Activated CD4-positive, alpha-beta memory T cell treated with anti-CD3 and anti-CD28 coated beads for 36 hours (primary cell): ENCODE measurements at regions of chr12 and their contacts with region 1.

Region 1: DNA sequence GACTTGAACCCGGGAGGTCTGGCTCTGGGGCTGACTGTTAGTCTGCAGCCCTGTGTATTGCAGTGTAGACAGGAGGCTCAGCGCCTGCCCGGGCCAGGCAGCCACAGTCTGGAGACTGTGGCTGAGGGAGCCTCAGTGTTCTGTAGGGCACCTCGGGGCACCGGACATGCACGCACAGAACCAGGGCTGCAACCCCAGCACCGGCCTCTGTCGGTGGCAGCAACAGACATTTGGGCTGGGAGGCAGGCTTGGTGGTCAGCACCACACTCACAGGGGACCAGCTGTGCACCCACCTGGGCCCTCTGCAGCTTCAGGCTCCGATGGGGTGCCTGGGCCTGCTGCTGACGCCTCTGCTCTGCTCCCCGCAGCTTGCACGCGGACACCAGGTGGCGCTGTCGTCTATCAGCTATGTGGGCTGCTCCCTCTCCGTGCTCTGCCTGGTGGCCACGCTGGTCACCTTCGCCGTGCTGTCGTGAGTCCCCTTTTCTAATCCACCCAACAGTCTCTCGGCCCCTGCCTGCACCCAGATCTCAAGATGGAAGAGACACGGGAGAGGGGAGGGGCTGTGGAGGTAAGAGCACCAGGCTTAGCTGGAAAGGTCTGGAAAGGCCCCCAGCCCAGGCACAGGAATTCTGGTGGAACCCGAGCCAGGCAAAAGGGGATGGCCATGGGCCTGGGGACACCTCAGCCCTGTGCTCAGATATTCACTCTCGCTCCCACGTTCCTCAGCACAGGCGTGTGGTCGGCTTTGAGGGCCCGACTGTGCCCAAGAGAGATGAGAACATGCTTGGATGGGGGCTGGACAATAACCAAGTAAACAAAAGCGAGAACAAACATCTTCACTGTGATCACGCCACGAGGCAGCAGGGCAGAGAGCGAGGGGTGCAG is 151.0 kb downstream of the ADGRD1 start:
- DNase-seq: peak; percentile 88
- H3K4me3 Mint-ChIP-seq: peak overlapping the region; percentile 10
- H3K27ac Mint-ChIP-seq: no peak overlapping the region
- H3K4me1 Mint-ChIP-seq: peaks cover 14% of the 10 kb centered on the region
- H3K27me3 Mint-ChIP-seq: peaks cover 7% of the 10 kb centered on the region

Region 2: DNA sequence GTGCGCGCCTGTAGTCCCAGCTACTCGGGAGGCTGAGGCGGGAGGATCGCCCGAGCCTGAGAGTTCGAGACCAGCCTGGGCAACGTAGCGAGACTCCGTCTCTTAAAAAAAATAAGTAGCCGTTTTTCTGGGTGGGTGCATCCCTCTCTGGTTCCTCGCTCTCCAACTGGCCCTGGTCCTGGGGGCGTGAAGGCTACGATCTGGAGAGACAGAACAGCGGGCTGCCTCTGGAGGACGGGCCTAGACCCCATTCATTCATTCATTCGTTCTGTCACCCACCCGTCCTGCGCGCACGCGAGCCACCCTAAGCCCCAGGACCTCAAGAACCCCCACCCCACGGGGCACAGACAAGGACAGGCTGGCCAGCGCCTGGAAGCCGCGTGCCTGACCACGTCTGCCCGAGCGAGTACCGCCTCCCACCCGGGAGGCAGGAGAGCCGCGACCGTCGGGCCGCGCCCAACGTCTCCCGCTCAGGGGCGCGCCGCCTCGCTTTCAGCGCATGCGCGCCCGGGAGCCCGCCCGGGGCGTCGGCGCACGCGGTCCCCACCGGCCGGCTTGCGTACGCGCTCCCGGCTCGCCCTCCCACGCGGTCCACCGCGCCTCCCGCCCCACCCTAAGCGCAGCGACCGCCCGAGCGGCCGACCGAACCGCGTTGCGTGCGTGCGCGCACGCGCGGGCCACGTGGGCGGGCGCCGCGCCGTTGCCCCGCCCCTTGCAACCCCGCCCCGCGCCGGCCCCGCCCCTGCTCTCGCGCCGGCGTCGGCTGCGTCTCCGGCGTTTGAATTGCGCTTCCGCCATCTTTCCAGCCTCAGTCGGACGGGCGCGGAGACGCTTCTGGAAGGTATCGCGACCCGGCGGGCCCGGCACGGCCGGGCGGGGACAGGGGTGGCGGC is 233.2 kb before region 1 on chr12 and contains the start of gene RAN:
- CTCF ChIA-PET with region 1: no interaction called
- POLR2A ChIA-PET with region 1: no interaction called
- intact Hi-C with region 1: loop called (anchors 5 kb)
- DNase-seq: peak; percentile 95
- H3K4me3 Mint-ChIP-seq: peak within 1 kb of the TSS; percentile 99
- H3K27ac Mint-ChIP-seq: peak within 1 kb of the TSS; percentile 99
- H3K4me1 Mint-ChIP-seq: peaks cover 49% of the 10 kb centered on the region
- H3K27me3 Mint-ChIP-seq: no peaks in the 10 kb centered on the region
- total RNA-seq, gene RAN: 2,100 to 2,144 TPM

Region 3: GRCh38 chr12:130909111-130909510 is 195.6 kb before region 1 on chr12:
- CTCF ChIA-PET with region 1: no interaction called
- POLR2A ChIA-PET with region 1: no interaction called
- intact Hi-C with region 1: no loop called
- DNase-seq: no peak
- H3K4me3 Mint-ChIP-seq: no peak overlapping the region
- H3K27ac Mint-ChIP-seq: no peak overlapping the region
- H3K4me1 Mint-ChIP-seq: no peaks in the 10 kb centered on the region
- H3K27me3 Mint-ChIP-seq: peaks cover 17% of the 10 kb centered on the region

Region 4: GRCh38 chr12:130970165-130970907 is 134.4 kb before region 1 on chr12:
- CTCF ChIA-PET with region 1: no interaction called
- POLR2A ChIA-PET with region 1: no interaction called
- intact Hi-C with region 1: no loop called
- DNase-seq: no peak
- H3K4me3 Mint-ChIP-seq: no peak overlapping the region
- H3K27ac Mint-ChIP-seq: no peak overlapping the region
- H3K4me1 Mint-ChIP-seq: no peaks in the 10 kb centered on the region
- H3K27me3 Mint-ChIP-seq: peaks cover 5% of the 10 kb centered on the region

Region 5: DNA sequence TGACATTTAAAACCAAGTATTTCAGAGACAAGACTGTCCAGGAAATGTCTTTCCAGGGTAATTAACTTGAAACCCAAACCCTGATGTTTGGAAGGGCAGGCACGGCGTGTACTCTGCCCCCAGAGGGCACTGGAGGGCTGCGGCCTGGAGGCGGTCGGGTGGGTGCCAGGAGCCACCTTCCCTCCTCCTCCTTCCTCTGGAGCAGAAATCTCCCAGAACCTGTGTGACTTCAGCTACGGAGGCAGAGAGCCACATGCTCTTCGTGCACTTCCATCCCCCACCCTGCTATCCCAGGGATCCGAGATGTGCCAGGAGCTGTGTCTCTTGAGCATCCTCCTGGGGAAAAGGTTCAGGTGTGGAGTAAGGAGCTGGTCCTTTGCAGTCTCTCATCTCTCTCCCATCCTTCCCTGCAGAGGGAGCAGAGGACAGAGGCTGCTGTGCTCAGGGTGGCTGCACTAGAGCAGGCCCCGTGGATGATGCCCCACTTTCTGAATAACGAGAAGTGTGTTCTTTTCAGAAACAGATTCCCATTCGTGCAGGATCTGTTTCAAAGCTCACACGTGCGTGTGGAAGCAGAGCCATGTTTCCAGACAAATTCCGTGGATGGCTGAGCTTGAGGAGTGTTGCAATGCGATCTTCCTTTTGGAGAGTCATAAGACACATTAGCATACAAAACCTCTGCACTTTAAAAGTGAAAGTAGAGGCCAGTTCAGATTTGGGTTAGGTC is 11.8 kb after region 1 on chr12:
- CTCF ChIA-PET with region 1: interaction called, 33 read pairs
- POLR2A ChIA-PET with region 1: no interaction called
- intact Hi-C with region 1: no loop called
- DNase-seq: no peak
- H3K4me3 Mint-ChIP-seq: no peak overlapping the region
- H3K27ac Mint-ChIP-seq: no peak overlapping the region
- H3K4me1 Mint-ChIP-seq: peaks cover 2% of the 10 kb centered on the region
- H3K27me3 Mint-ChIP-seq: peaks cover 17% of the 10 kb centered on the region

Region 6: DNA sequence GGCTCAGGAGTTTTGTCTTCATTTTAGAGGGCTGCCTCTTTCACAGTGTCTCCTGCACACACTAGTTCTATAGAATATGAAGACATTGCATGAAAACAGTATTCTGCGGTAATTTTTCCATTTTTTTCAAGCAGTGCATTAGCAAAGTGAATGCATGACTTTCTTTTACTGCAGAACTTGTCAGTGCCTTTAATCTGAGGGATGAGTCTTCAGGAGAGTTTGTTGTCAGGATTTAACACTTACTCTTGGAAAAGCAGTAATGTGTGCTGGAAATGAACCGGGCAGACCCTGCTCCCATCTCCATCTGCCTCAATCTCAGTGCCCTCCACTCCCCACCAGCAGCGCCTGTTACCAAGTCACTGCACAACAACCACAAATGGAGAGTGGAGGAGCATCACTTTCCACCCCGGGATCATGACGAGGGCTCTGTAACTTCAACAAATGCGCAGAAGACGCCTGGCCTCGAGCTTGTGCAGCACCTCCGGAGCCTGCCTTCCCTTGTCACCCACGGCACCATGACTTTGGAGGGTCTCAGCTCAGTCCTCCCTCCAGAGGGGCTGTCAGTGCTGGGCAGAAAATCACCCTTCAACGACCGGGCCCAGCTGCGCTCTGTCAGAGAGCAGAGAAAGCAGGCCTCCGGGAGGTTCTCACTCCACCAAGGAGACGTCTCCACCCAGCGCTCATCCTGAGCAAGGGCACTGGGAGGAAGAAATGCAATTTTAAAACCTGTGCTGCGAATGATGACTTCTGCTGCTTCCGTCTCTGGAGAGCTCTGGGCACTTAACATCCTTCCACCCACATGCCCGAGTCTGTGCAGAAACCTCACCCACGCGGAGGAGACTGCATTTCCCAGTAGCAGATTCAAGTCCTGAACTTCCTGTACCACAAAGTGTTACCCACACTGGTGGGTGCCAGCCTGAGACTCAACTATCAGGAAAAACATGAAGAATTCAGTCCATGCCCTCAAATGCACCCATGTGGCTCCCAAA is 104.7 kb after region 1 on chr12:
- CTCF ChIA-PET with region 1: interaction called, 4 read pairs
- POLR2A ChIA-PET with region 1: no interaction called
- intact Hi-C with region 1: loop called (anchors 2 kb)
- DNase-seq: peak; percentile 37
- H3K4me3 Mint-ChIP-seq: no peak overlapping the region
- H3K27ac Mint-ChIP-seq: peak overlapping the region; percentile 46
- H3K4me1 Mint-ChIP-seq: peaks cover 25% of the 10 kb centered on the region
- H3K27me3 Mint-ChIP-seq: peaks cover 7% of the 10 kb centered on the region

Region 7: DNA sequence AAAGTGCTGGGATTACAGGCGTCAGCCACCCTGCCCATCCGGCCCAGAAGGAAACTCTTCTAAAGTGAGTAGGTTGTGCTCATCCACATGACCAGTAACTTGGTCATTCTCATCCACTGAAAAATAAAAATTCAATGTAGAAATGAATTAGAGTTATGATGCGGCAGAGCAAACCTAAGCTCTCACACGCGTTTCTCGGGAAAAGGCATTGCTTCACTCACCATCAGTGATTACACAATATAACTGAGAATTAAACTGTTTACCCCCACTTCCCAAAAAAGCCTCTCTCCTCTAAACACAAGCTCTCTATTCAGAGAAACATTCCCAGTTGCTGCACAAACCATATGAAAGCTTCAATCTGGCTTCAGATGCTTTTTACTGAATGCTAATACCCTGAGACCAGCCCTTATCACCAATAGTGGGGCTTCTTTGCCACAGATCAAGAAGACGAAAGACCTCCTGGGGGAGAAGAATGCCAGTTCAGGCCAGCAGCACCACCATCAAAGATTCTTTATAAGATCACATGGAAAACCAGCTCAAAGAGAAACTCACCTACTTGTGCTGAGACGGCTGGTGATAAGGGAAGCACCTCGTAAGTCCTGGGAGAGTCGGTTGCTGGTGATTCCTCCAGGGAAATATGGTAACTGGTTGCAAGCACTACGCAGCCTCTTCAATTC is 484.7 kb after region 1 on chr12:
- CTCF ChIA-PET with region 1: no interaction called
- POLR2A ChIA-PET with region 1: no interaction called
- intact Hi-C with region 1: no loop called
- DNase-seq: no peak
- H3K4me3 Mint-ChIP-seq: no peak overlapping the region
- H3K27ac Mint-ChIP-seq: no peak overlapping the region
- H3K4me1 Mint-ChIP-seq: peaks cover 16% of the 10 kb centered on the region
- H3K27me3 Mint-ChIP-seq: no peaks in the 10 kb centered on the region

Region 8: GRCh38 chr12:131608740-131609690 is 504.3 kb after region 1 on chr12:
- CTCF ChIA-PET with region 1: no interaction called
- POLR2A ChIA-PET with region 1: no interaction called
- intact Hi-C with region 1: loop called (anchors 10 kb)
- DNase-seq: peak; percentile 78
- H3K4me3 Mint-ChIP-seq: no peak overlapping the region
- H3K27ac Mint-ChIP-seq: peak overlapping the region; percentile 10
- H3K4me1 Mint-ChIP-seq: peaks cover 56% of the 10 kb centered on the region
- H3K27me3 Mint-ChIP-seq: no peaks in the 10 kb centered on the region